HepG2 (cell line): ENCODE measurements at regions of chr11 and their contacts with region 1.

Region 1: GRCh38 chr11:6900327-6900999 is 8.2 kb upstream of the OR2D2 start:
- DNase-seq: no peak
- ATAC-seq: no peak
- H3K4me3 ChIP-seq: no peak overlapping the region
- H3K27ac ChIP-seq: no peak overlapping the region
- H3K4me1 ChIP-seq: no peaks in the 10 kb centered on the region
- H3K27me3 ChIP-seq: no peaks in the 10 kb centered on the region
- CTCF ChIP-seq: no peak
- EP300 ChIP-seq: no peak
- POLR2A ChIP-seq: no peak
- RAD21 ChIP-seq: no peak

Region 2: DNA sequence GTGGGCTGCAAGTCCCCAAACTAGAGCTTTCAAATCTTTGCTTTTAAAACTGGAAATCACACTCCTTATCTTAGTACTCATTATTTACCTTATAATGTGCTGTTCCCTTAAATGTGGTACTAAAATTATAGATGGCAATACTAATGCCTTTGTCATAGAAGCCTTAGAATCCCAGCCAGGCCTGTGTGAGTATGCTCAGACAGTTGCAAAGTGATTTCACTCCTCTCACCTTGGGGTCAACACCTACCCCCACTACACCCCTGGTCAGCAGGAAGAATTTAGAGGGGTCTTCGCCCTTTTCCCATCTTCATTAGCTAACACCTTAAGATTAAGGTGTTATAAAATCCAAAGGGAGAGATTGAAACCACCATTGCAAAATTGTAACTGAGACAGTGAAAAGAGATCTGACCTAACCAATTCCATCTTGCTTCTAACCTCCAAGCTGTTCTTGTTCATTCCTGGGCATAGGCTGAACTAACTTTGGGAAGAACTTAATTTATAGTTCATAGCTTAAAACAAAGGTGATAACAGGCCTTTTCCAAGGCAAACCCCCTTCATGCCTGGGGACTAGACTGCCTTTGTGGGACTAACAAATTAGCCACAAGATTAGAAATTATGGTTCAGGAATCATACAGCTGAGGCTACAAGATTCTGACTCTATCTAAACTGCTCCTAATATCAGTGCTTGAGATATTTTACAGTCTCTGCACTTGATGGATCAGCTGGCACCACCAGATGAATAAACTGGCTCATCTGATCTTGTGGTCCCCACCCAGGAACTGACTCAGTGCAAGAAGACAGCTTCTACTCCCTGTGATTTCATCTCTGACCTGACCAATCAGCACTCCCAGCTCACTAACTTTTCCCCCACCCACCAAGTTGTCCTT is 206.9 kb before region 1 on chr11:
- CTCF ChIA-PET with region 1: no interaction called
- POLR2A ChIA-PET with region 1: no interaction called
- in situ Hi-C with region 1: no loop called
- intact Hi-C with region 1: no loop called
- DNase-seq: no peak
- ATAC-seq: no peak
- H3K4me3 ChIP-seq: no peak overlapping the region
- H3K27ac ChIP-seq: no peak overlapping the region
- H3K4me1 ChIP-seq: peaks cover 13% of the 10 kb centered on the region; the same call in 1 of the 2 replicates
- H3K27me3 ChIP-seq: peaks cover 0 to 9% of the 10 kb centered on the region in 2 experiments; a peak in 1 of 5 replicates
- CTCF ChIP-seq: no peak
- EP300 ChIP-seq: no peak
- POLR2A ChIP-seq: no peak
- RAD21 ChIP-seq: no peak

Region 3: DNA sequence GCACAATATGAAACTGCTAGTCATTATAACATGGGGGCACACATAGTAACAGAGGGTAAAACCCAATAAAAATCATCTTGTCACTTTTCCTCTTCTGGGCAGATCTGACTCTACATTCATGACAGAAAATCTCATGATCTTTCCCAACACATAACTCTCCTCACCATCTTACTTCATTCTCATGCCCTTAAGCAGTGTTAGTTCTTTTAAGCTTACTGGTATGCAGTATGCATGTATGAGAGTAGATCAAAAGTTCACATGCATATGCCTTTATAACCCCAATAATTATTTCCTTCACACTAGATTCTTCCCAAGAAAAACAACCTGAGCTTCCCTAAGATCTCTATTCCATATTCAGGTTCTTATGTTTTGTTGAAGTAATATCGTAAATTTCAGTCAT is 29.2 kb before region 1 on chr11:
- CTCF ChIA-PET with region 1: no interaction called
- POLR2A ChIA-PET with region 1: no interaction called
- in situ Hi-C with region 1: no loop called
- intact Hi-C with region 1: no loop called
- DNase-seq: no peak
- ATAC-seq: no peak
- H3K4me3 ChIP-seq: no peak overlapping the region
- H3K27ac ChIP-seq: no peak overlapping the region
- H3K4me1 ChIP-seq: no peaks in the 10 kb centered on the region
- H3K27me3 ChIP-seq: no peaks in the 10 kb centered on the region
- CTCF ChIP-seq: no peak
- EP300 ChIP-seq: no peak
- POLR2A ChIP-seq: no peak
- RAD21 ChIP-seq: no peak

Region 4: GRCh38 chr11:6931146-6931713 is 30.8 kb after region 1 on chr11:
- CTCF ChIA-PET with region 1: no interaction called
- POLR2A ChIA-PET with region 1: no interaction called
- in situ Hi-C with region 1: no loop called
- intact Hi-C with region 1: loop called (anchors 1 kb)
- DNase-seq: no peak
- ATAC-seq: no peak
- H3K4me3 ChIP-seq: no peak overlapping the region
- H3K27ac ChIP-seq: no peak overlapping the region
- H3K4me1 ChIP-seq: no peaks in the 10 kb centered on the region
- H3K27me3 ChIP-seq: peaks cover 0 to 16% of the 10 kb centered on the region in 2 experiments; a peak in 3 of 5 replicates
- CTCF ChIP-seq: no peak
- EP300 ChIP-seq: no peak
- POLR2A ChIP-seq: no peak
- RAD21 ChIP-seq: no peak